Activated CD4-positive, alpha-beta T cell treated with anti-CD3 and anti-CD28 coated beads, Interleukin-2, amount 10 ng/mL, durations not matched to agents 7 days and 5 days (primary cell): ENCODE measurements at regions of chr22 and their contacts with region 1.

Region 1: GRCh38 chr22:39496131-39496838 is 5.8 kb upstream of the MIEF1 start:
- DNase-seq: peak; percentile 70
- H3K4me3 Mint-ChIP-seq: no peak overlapping the region
- H3K27ac Mint-ChIP-seq: peak overlapping the region; percentile 36
- H3K4me1 Mint-ChIP-seq: peaks cover 27% of the 10 kb centered on the region
- H3K27me3 Mint-ChIP-seq: peaks cover 5% of the 10 kb centered on the region

Region 2: GRCh38 chr22:39220897-39221850 is 275.1 kb before region 1 on chr22:
- CTCF ChIA-PET with region 1: no interaction called
- POLR2A ChIA-PET with region 1: no interaction called
- DNase-seq: no peak
- H3K4me3 Mint-ChIP-seq: no peak overlapping the region
- H3K27ac Mint-ChIP-seq: no peak overlapping the region
- H3K4me1 Mint-ChIP-seq: peaks cover 2% of the 10 kb centered on the region
- H3K27me3 Mint-ChIP-seq: peaks cover 13% of the 10 kb centered on the region

Region 3: GRCh38 chr22:39482768-39483167 is 13.5 kb before region 1 on chr22:
- CTCF ChIA-PET with region 1: interaction called, 10 read pairs
- POLR2A ChIA-PET with region 1: no interaction called
- DNase-seq: no peak
- H3K4me3 Mint-ChIP-seq: no peak overlapping the region
- H3K27ac Mint-ChIP-seq: no peak overlapping the region
- H3K4me1 Mint-ChIP-seq: no peaks in the 10 kb centered on the region
- H3K27me3 Mint-ChIP-seq: no peaks in the 10 kb centered on the region